ENCODE measurements at regions of chr9 and their contacts with region 1.

Region 1: GRCh38 chr9:131578731-131579504 is 33.6 kb downstream of the PRRT1B start:
- DNase-seq: peak; percentile 30 to 69 (median 63)
- ATAC-seq: peak; percentile 90
- H3K4me3 ChIP-seq: peak overlapping the region; percentile 34
- H3K4me3 Mint-ChIP-seq: peak overlapping the region; percentile 29 to 79 (median 72)
- H3K27ac ChIP-seq: peak overlapping the region; percentile 71
- H3K27ac Mint-ChIP-seq: peak overlapping the region; percentile 88 to 96 (median 92)
- H3K4me1 ChIP-seq: peaks cover 23 to 26% of the 10 kb centered on the region in 2 donors
- H3K4me1 Mint-ChIP-seq: peaks cover 18 to 42% (median 26%) of the 10 kb centered on the region in 7 donors
- H3K27me3 ChIP-seq: no peaks in the 10 kb centered on the region
- H3K27me3 Mint-ChIP-seq: no peaks in the 10 kb centered on the region

Region 2: GRCh38 chr9:131546336-131547084 is 32.4 kb before region 1 on chr9:
- CTCF ChIA-PET with region 1: no interaction called
- POLR2A ChIA-PET with region 1: interaction called, 3 read pairs
- intact Hi-C with region 1: loop called in 1 of 2 experiments (anchors 2 kb)
- DNase-seq: peak in 1 of 9 donors; percentile 17
- ATAC-seq: no peak
- H3K4me3 ChIP-seq: peak overlapping the region; percentile 47
- H3K4me3 Mint-ChIP-seq: peak overlapping the region; percentile 69 to 86 (median 82)
- H3K27ac ChIP-seq: no peak overlapping the region
- H3K27ac Mint-ChIP-seq: peak overlapping the region in 1 of 9 donors; percentile 29
- H3K4me1 ChIP-seq: peaks cover 0 to 16% of the 10 kb centered on the region in 2 donors
- H3K4me1 Mint-ChIP-seq: peaks cover 5 to 26% (median 16%) of the 10 kb centered on the region in 7 donors
- H3K27me3 ChIP-seq: peaks cover 0 to 4% of the 10 kb centered on the region in 2 donors
- H3K27me3 Mint-ChIP-seq: peaks cover 36 to 75% (median 47%) of the 10 kb centered on the region in 5 donors

Region 3: GRCh38 chr9:131678499-131679111 is 99.7 kb after region 1 on chr9:
- CTCF ChIA-PET with region 1: no interaction called
- POLR2A ChIA-PET with region 1: no interaction called
- intact Hi-C with region 1: no loop called
- DNase-seq: peak in 1 of 9 donors; percentile 74
- ATAC-seq: peak; percentile 95
- H3K4me3 ChIP-seq: no peak overlapping the region
- H3K4me3 Mint-ChIP-seq: peak overlapping the region in 9 of 10 donors; percentile 10 to 76 (median 42)
- H3K27ac ChIP-seq: no peak overlapping the region
- H3K27ac Mint-ChIP-seq: peak overlapping the region; percentile 16 to 95 (median 60)
- H3K4me1 ChIP-seq: peaks cover 41 to 48% of the 10 kb centered on the region in 2 donors
- H3K4me1 Mint-ChIP-seq: peaks cover 53 to 91% (median 83%) of the 10 kb centered on the region in 7 donors
- H3K27me3 ChIP-seq: no peaks in the 10 kb centered on the region
- H3K27me3 Mint-ChIP-seq: no peaks in the 10 kb centered on the region